K562 (cell line): ENCODE measurements at regions of chr17 and their contacts with region 1.

Region 1: DNA sequence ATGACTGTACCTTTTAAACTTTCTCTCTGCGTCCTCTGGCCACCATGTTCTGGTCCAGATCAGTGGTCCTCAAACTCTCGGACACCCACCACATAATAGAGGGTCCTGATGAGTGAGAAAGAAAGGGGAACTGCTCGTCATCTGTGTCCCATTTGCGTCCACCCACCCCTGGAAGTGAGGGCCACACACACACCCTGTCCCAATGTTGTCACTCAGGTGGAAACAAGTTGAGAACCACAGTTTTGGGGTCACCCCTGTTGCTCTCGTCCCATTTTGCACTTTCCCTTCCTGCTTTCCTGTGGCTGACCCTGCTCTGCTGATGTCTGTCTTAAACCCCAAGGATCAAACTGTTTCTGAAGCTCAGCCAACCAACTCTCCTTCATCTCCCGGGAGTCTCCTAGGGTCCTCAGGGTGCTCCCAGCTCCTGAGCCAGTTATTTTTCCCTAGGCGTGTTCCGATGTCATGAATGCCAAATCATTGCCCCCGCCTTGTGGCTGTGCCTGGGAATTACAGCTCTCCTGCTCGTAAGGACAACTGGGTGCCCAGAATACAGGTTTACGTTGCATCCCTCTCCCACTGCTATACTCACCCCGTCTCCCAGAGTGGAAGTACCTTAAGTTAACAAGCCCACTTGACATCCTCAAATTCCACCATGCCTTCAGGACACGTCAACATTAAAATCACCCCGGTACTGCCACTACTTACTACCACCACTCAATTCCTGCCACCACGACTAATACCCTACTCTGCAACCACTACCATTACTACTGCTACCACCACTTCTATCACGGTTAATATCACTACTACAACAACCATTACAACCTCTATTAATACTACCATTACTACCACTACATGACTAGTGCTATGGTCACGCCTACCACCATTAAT is 26.0 kb upstream of the HNF1B start:
- DNase-seq: peak; percentile 40 to 60 (median 49)
- ATAC-seq: peak; percentile 77
- H3K4me3 ChIP-seq: no peak overlapping the region
- H3K27ac ChIP-seq: no peak overlapping the region
- H3K4me1 ChIP-seq: no peaks in the 10 kb centered on the region
- H3K27me3 ChIP-seq: peaks cover 4 to 18% of the 10 kb centered on the region in 2 experiments; a peak in 4 of 5 replicates
- CTCF ChIP-seq: peak; percentile 73 to 76 (median 73)
- EP300 ChIP-seq: no peak
- POLR2A ChIP-seq: no peak
- RAD21 ChIP-seq: peak in 1 of 2 experiments; percentile 63; a peak in 2 of 4 replicates

Region 2: DNA sequence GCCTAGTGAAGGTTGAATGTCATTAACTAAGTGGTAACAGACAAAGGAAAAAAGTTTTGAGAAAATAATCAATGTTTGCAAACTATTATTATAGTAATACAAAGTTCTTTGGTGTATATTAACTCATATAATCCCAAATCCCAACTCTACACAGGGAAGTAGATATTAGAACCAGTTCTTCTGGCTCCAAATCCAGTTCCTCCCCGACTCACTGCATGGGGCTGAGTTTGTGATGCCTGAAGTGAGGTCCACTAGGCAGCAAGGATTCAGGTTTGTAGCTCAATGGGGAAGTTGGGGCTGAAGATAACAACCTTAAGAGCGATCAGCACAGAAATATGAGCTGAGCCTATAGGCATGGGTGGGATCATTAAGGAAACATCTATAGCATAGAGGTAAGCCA is 156.1 kb before region 1 on chr17:
- CTCF ChIA-PET with region 1: no interaction called
- POLR2A ChIA-PET with region 1: no interaction called
- in situ Hi-C with region 1: no loop called
- intact Hi-C with region 1: no loop called
- DNase-seq: no peak
- ATAC-seq: no peak
- H3K4me3 ChIP-seq: no peak overlapping the region
- H3K27ac ChIP-seq: no peak overlapping the region
- H3K4me1 ChIP-seq: peaks cover 0 to under 1% of the 10 kb centered on the region in 2 experiments; a peak in 2 of 5 replicates
- H3K27me3 ChIP-seq: no peaks in the 10 kb centered on the region
- CTCF ChIP-seq: no peak
- EP300 ChIP-seq: no peak
- POLR2A ChIP-seq: no peak
- RAD21 ChIP-seq: no peak

Region 3: GRCh38 chr17:37650419-37651003 is 120.4 kb before region 1 on chr17:
- CTCF ChIA-PET with region 1: interaction called, 3 read pairs
- POLR2A ChIA-PET with region 1: no interaction called
- in situ Hi-C with region 1: no loop called
- intact Hi-C with region 1: loop called (anchors 5 kb)
- DNase-seq: peak in 3 of 4 experiments; percentile 22 to 55 (median 42)
- ATAC-seq: peak; percentile 85
- H3K4me3 ChIP-seq: no peak overlapping the region
- H3K27ac ChIP-seq: no peak overlapping the region
- H3K4me1 ChIP-seq: no peaks in the 10 kb centered on the region
- H3K27me3 ChIP-seq: peaks cover 0 to 9% of the 10 kb centered on the region in 2 experiments; a peak in 4 of 5 replicates
- CTCF ChIP-seq: peak; percentile 51 to 78 (median 61)
- EP300 ChIP-seq: no peak
- POLR2A ChIP-seq: no peak
- RAD21 ChIP-seq: peak; percentile 34 to 66; a peak in 2 of 4 replicates

Region 4: GRCh38 chr17:37744961-37745800 is 25.7 kb before region 1 on chr17 and contains the start of gene HNF1B:
- CTCF ChIA-PET with region 1: no interaction called
- POLR2A ChIA-PET with region 1: no interaction called
- in situ Hi-C with region 1: no loop called
- intact Hi-C with region 1: no loop called
- DNase-seq: no peak
- ATAC-seq: no peak
- H3K4me3 ChIP-seq: no peak within 1 kb of the TSS
- H3K27ac ChIP-seq: no peak within 1 kb of the TSS
- H3K4me1 ChIP-seq: peaks cover 0 to 36% of the 10 kb centered on the region in 2 experiments; a peak in 2 of 5 replicates
- H3K27me3 ChIP-seq: peaks cover 50 to 54% of the 10 kb centered on the region in 2 experiments
- CTCF ChIP-seq: no peak
- EP300 ChIP-seq: no peak
- POLR2A ChIP-seq: no peak
- RAD21 ChIP-seq: no peak
- polyA plus RNA-seq, gene HNF1B: not detected